ENCODE measurements at regions of chr6 and their contacts with region 1.

Region 1: GRCh38 chr6:114144887-114145851 is 174.2 kb upstream of the HDAC2 start:
- DNase-seq: peak; percentile 88 to 93
- H3K4me3 ChIP-seq: no peak overlapping the region
- H3K4me3 Mint-ChIP-seq: peak overlapping the region; percentile 70
- H3K27ac Mint-ChIP-seq: peak overlapping the region; percentile 84
- H3K4me1 ChIP-seq: peaks cover 38% of the 10 kb centered on the region
- H3K4me1 Mint-ChIP-seq: peaks cover 34% of the 10 kb centered on the region
- H3K27me3 ChIP-seq: no peaks in the 10 kb centered on the region
- H3K27me3 Mint-ChIP-seq: no peaks in the 10 kb centered on the region
- CTCF ChIP-seq: no peak

Region 2: GRCh38 chr6:113529196-113529595 is 616.0 kb before region 1 on chr6:
- CTCF ChIA-PET with region 1: no interaction called
- POLR2A ChIA-PET with region 1: no interaction called
- intact Hi-C with region 1: no loop called
- DNase-seq: no peak
- H3K4me3 ChIP-seq: no peak overlapping the region
- H3K4me3 Mint-ChIP-seq: no peak overlapping the region
- H3K27ac Mint-ChIP-seq: no peak overlapping the region
- H3K4me1 ChIP-seq: peaks cover 21% of the 10 kb centered on the region
- H3K4me1 Mint-ChIP-seq: peaks cover 19% of the 10 kb centered on the region
- H3K27me3 ChIP-seq: no peaks in the 10 kb centered on the region
- H3K27me3 Mint-ChIP-seq: no peaks in the 10 kb centered on the region
- CTCF ChIP-seq: no peak

Region 3: DNA sequence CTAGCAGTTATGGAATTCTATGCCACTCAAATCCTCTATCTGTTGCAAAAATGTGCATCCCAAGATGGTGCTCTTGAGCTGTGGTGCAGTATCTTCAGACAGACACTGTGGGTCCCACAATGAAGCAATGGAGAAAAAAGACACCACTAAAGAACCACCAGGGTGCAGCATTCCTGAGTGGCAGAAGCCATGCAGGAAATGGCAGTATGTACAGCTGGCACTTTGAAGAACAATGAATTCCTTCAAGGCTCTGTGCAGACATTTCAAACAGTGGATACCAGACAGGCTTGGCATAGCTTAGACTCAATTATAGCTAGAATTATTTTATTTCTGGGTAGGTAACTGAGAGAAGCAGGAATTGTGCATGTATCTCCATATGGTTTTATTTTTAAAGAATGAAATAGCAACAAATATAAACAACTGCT is 150.2 kb before region 1 on chr6:
- CTCF ChIA-PET with region 1: no interaction called
- POLR2A ChIA-PET with region 1: no interaction called
- intact Hi-C with region 1: loop called (anchors 1 kb)
- DNase-seq: peak; percentile 83 to 84
- H3K4me3 ChIP-seq: no peak overlapping the region
- H3K4me3 Mint-ChIP-seq: peak overlapping the region; percentile 63
- H3K27ac Mint-ChIP-seq: peak overlapping the region; percentile 77
- H3K4me1 ChIP-seq: peaks cover 28% of the 10 kb centered on the region
- H3K4me1 Mint-ChIP-seq: peaks cover 33% of the 10 kb centered on the region
- H3K27me3 ChIP-seq: no peaks in the 10 kb centered on the region
- H3K27me3 Mint-ChIP-seq: no peaks in the 10 kb centered on the region
- CTCF ChIP-seq: peak; percentile 78 to 85

Region 4: GRCh38 chr6:114096561-114097172 is 48.5 kb before region 1 on chr6:
- CTCF ChIA-PET with region 1: no interaction called
- POLR2A ChIA-PET with region 1: no interaction called
- intact Hi-C with region 1: loop called (anchors 2 kb)
- DNase-seq: peak in 1 of 2 experiments; percentile 20
- H3K4me3 ChIP-seq: no peak overlapping the region
- H3K4me3 Mint-ChIP-seq: no peak overlapping the region
- H3K27ac Mint-ChIP-seq: no peak overlapping the region
- H3K4me1 ChIP-seq: no peaks in the 10 kb centered on the region
- H3K4me1 Mint-ChIP-seq: no peaks in the 10 kb centered on the region
- H3K27me3 ChIP-seq: no peaks in the 10 kb centered on the region
- H3K27me3 Mint-ChIP-seq: no peaks in the 10 kb centered on the region
- CTCF ChIP-seq: peak; percentile 67

Region 5: GRCh38 chr6:114121913-114122645 is 23.1 kb before region 1 on chr6:
- CTCF ChIA-PET with region 1: no interaction called
- POLR2A ChIA-PET with region 1: no interaction called
- intact Hi-C with region 1: loop called (anchors 1 kb)
- DNase-seq: peak; percentile 4 to 33
- H3K4me3 ChIP-seq: no peak overlapping the region
- H3K4me3 Mint-ChIP-seq: no peak overlapping the region
- H3K27ac Mint-ChIP-seq: peak overlapping the region; percentile 29
- H3K4me1 ChIP-seq: peaks cover 16% of the 10 kb centered on the region
- H3K4me1 Mint-ChIP-seq: peaks cover 14% of the 10 kb centered on the region
- H3K27me3 ChIP-seq: no peaks in the 10 kb centered on the region
- H3K27me3 Mint-ChIP-seq: no peaks in the 10 kb centered on the region
- CTCF ChIP-seq: no peak

Region 6: GRCh38 chr6:114194362-114195026 is 49.3 kb after region 1 on chr6:
- CTCF ChIA-PET with region 1: no interaction called
- POLR2A ChIA-PET with region 1: no interaction called
- intact Hi-C with region 1: loop called (anchors 1 kb)
- DNase-seq: peak in 1 of 2 experiments; percentile 7
- H3K4me3 ChIP-seq: no peak overlapping the region
- H3K4me3 Mint-ChIP-seq: no peak overlapping the region
- H3K27ac Mint-ChIP-seq: peak overlapping the region; percentile 89
- H3K4me1 ChIP-seq: peaks cover 22% of the 10 kb centered on the region
- H3K4me1 Mint-ChIP-seq: peaks cover 31% of the 10 kb centered on the region
- H3K27me3 ChIP-seq: no peaks in the 10 kb centered on the region
- H3K27me3 Mint-ChIP-seq: no peaks in the 10 kb centered on the region
- CTCF ChIP-seq: no peak

Region 7: DNA sequence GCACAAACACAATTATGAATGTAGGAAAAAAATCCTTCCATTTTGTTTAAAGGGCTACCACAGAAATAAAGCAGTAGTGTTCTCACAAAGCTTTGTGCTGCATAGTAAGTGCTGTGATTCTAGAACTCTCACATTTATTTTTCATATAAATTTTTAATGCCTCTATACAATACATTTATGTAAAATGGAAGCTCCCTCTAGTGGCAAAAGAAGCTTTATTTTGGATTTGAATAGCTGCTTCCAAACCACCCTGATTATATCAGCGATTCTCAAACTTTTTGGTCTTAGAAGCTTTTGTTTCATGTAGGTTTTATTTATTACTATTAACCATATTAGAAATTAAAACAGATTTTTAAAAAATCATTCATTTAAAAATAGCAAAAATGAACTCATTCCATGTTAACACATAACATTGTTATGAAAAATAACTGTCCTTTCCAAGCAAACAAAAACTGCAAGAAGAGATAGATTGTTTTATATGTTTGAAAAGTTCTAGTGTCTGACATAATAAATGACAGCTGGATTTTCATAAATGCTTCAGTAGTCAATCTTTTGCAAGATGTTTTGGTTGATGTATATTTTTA is 159.2 kb after region 1 on chr6:
- CTCF ChIA-PET with region 1: interaction called, 5 read pairs
- POLR2A ChIA-PET with region 1: no interaction called
- intact Hi-C with region 1: loop called (anchors 2 kb)
- DNase-seq: peak in 1 of 2 experiments; percentile 10
- H3K4me3 ChIP-seq: no peak overlapping the region
- H3K4me3 Mint-ChIP-seq: no peak overlapping the region
- H3K27ac Mint-ChIP-seq: no peak overlapping the region
- H3K4me1 ChIP-seq: no peaks in the 10 kb centered on the region
- H3K4me1 Mint-ChIP-seq: no peaks in the 10 kb centered on the region
- H3K27me3 ChIP-seq: no peaks in the 10 kb centered on the region
- H3K27me3 Mint-ChIP-seq: no peaks in the 10 kb centered on the region
- CTCF ChIP-seq: peak; percentile 44 to 52

Region 8: DNA sequence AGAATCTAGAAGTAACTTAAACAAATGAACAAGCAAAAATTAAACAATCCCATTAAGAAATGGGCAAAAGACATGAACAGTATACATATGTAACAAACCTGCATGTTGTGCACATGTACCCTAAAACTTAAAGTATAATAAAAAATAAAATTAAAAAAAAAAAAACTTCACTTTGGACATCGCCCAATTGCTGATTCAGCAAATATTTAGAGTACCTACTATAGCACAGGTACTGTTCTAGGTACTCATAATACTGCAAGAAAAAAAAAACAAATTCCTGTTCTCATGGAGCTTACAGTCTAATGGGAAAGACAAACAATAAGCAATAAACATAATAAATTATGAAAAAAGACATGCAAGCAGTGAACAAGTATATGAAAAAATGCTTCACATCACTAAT is 699.2 kb after region 1 on chr6:
- CTCF ChIA-PET with region 1: no interaction called
- POLR2A ChIA-PET with region 1: no interaction called
- intact Hi-C with region 1: loop called (anchors 10 kb)
- DNase-seq: no peak
- H3K4me3 ChIP-seq: no peak overlapping the region
- H3K4me3 Mint-ChIP-seq: no peak overlapping the region
- H3K27ac Mint-ChIP-seq: no peak overlapping the region
- H3K4me1 ChIP-seq: peaks cover 2% of the 10 kb centered on the region; the same call in 1 of the 2 replicates
- H3K4me1 Mint-ChIP-seq: no peaks in the 10 kb centered on the region
- H3K27me3 ChIP-seq: no peaks in the 10 kb centered on the region
- H3K27me3 Mint-ChIP-seq: no peaks in the 10 kb centered on the region
- CTCF ChIP-seq: no peak